Naive thymus-derived CD4-positive, alpha-beta T cell (primary cell): ENCODE measurements at regions of chr20 and their contacts with region 1.

Region 1: DNA sequence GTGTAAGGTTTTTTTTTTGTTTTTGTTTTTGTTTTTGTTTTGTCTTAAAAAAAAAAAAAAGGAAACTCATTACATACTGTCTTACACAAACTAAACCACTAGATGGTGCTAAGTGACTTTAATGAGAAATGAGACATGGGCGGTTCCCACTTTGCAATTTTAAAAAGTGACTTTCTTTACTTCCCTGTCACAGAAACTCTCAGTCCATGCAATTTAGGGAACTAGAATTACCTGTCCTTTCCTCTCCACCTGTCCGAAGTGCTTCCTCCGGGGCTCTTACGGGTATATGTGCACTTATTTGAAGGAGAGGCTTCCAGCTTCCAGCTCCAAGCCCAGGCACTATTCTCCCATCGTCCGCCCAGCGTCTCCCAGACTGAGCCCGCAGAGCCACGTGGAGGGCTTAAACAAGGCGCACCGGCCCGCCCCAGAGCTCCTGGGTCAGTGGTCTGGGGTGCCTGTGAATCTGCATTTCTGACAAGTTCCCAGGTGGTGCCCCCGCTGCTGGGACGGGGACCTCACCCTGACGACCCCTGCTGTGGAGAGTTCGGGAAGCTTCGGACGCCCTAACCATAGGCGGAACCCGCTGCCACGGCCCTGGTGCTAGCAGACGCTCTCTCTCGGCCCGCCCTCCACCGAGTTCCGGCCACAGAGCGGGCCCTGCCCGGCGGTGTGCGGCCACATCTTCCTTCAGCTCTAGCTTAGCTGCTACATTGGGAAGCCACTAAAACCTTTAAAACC is 26.1 kb downstream of the BFSP1 start:
- DNase-seq: peak; percentile 13 to 70 (median 62)
- ATAC-seq: peak; percentile 85
- H3K4me3 ChIP-seq: peak overlapping the region; percentile 65
- H3K4me3 Mint-ChIP-seq: peak overlapping the region; percentile 82 to 95 (median 91)
- H3K27ac ChIP-seq: no peak overlapping the region
- H3K27ac Mint-ChIP-seq: peak overlapping the region in 8 of 9 donors; percentile 15 to 92 (median 82)
- H3K4me1 ChIP-seq: peaks cover 6 to 27% of the 10 kb centered on the region in 2 donors
- H3K4me1 Mint-ChIP-seq: peaks cover 10 to 57% (median 36%) of the 10 kb centered on the region in 7 donors
- H3K27me3 ChIP-seq: no peaks in the 10 kb centered on the region
- H3K27me3 Mint-ChIP-seq: peaks cover 0 to 19% (median 0%) of the 10 kb centered on the region in 5 donors

Region 2: GRCh38 chr20:17169585-17170136 is 335.4 kb before region 1 on chr20:
- CTCF ChIA-PET with region 1: no interaction called
- POLR2A ChIA-PET with region 1: no interaction called
- intact Hi-C with region 1: no loop called
- DNase-seq: no peak
- ATAC-seq: no peak
- H3K4me3 ChIP-seq: no peak overlapping the region
- H3K4me3 Mint-ChIP-seq: no peak overlapping the region
- H3K27ac ChIP-seq: no peak overlapping the region
- H3K27ac Mint-ChIP-seq: no peak overlapping the region
- H3K4me1 ChIP-seq: no peaks in the 10 kb centered on the region
- H3K4me1 Mint-ChIP-seq: no peaks in the 10 kb centered on the region
- H3K27me3 ChIP-seq: no peaks in the 10 kb centered on the region
- H3K27me3 Mint-ChIP-seq: peaks cover 0 to 5% (median 3%) of the 10 kb centered on the region in 5 donors

Region 3: GRCh38 chr20:17536944-17537444 is 31.9 kb after region 1 on chr20:
- CTCF ChIA-PET with region 1: no interaction called
- POLR2A ChIA-PET with region 1: no interaction called
- intact Hi-C with region 1: loop called (anchors 1 kb)
- DNase-seq: peak; percentile 22 to 73 (median 65)
- ATAC-seq: peak; percentile 98
- H3K4me3 ChIP-seq: no peak overlapping the region
- H3K4me3 Mint-ChIP-seq: no peak overlapping the region
- H3K27ac ChIP-seq: no peak overlapping the region
- H3K27ac Mint-ChIP-seq: peak overlapping the region in 2 of 9 donors; percentile 50 to 52
- H3K4me1 ChIP-seq: peaks cover 0 to under 1% of the 10 kb centered on the region in 2 donors
- H3K4me1 Mint-ChIP-seq: peaks cover 0 to 39% (median 0%) of the 10 kb centered on the region in 7 donors
- H3K27me3 ChIP-seq: no peaks in the 10 kb centered on the region
- H3K27me3 Mint-ChIP-seq: peaks cover 10 to 30% (median 18%) of the 10 kb centered on the region in 5 donors

Region 4: GRCh38 chr20:17550983-17551350 is 45.9 kb after region 1 on chr20:
- CTCF ChIA-PET with region 1: no interaction called
- POLR2A ChIA-PET with region 1: no interaction called
- intact Hi-C with region 1: no loop called
- DNase-seq: no peak
- ATAC-seq: no peak
- H3K4me3 ChIP-seq: no peak overlapping the region
- H3K4me3 Mint-ChIP-seq: no peak overlapping the region
- H3K27ac ChIP-seq: no peak overlapping the region
- H3K27ac Mint-ChIP-seq: no peak overlapping the region
- H3K4me1 ChIP-seq: no peaks in the 10 kb centered on the region
- H3K4me1 Mint-ChIP-seq: no peaks in the 10 kb centered on the region
- H3K27me3 ChIP-seq: no peaks in the 10 kb centered on the region
- H3K27me3 Mint-ChIP-seq: peaks cover 3 to 22% (median 6%) of the 10 kb centered on the region in 5 donors

Region 5: GRCh38 chr20:17617551-17618223 is 112.6 kb after region 1 on chr20:
- CTCF ChIA-PET with region 1: interaction called, 9 read pairs
- POLR2A ChIA-PET with region 1: no interaction called
- intact Hi-C with region 1: loop called (anchors 1 kb)
- DNase-seq: peak; percentile 22 to 59 (median 30)
- ATAC-seq: peak; percentile 56
- H3K4me3 ChIP-seq: no peak overlapping the region
- H3K4me3 Mint-ChIP-seq: no peak overlapping the region
- H3K27ac ChIP-seq: no peak overlapping the region
- H3K27ac Mint-ChIP-seq: peak overlapping the region in 1 of 9 donors; percentile 14
- H3K4me1 ChIP-seq: peaks cover 3 to 4% of the 10 kb centered on the region in 2 donors
- H3K4me1 Mint-ChIP-seq: peaks cover 0 to 8% (median 6%) of the 10 kb centered on the region in 7 donors
- H3K27me3 ChIP-seq: no peaks in the 10 kb centered on the region
- H3K27me3 Mint-ChIP-seq: no peaks in the 10 kb centered on the region

Region 6: GRCh38 chr20:17898548-17898994 is 393.5 kb after region 1 on chr20:
- CTCF ChIA-PET with region 1: interaction called, 39 read pairs
- POLR2A ChIA-PET with region 1: no interaction called
- intact Hi-C with region 1: loop called (anchors 1 kb)
- DNase-seq: peak; percentile 23 to 64 (median 54)
- ATAC-seq: peak; percentile 81
- H3K4me3 ChIP-seq: no peak overlapping the region
- H3K4me3 Mint-ChIP-seq: no peak overlapping the region
- H3K27ac ChIP-seq: no peak overlapping the region
- H3K27ac Mint-ChIP-seq: no peak overlapping the region
- H3K4me1 ChIP-seq: no peaks in the 10 kb centered on the region
- H3K4me1 Mint-ChIP-seq: peaks cover 0 to 21% (median 11%) of the 10 kb centered on the region in 7 donors
- H3K27me3 ChIP-seq: no peaks in the 10 kb centered on the region
- H3K27me3 Mint-ChIP-seq: peaks cover 22 to 41% (median 34%) of the 10 kb centered on the region in 5 donors

Region 7: GRCh38 chr20:17995967-17996819 is 491.1 kb after region 1 on chr20:
- CTCF ChIA-PET with region 1: interaction called, 7 read pairs
- POLR2A ChIA-PET with region 1: no interaction called
- intact Hi-C with region 1: loop called (anchors 1 kb)
- DNase-seq: peak in 7 of 9 donors; percentile 35 to 68 (median 59)
- ATAC-seq: peak; percentile 94
- H3K4me3 ChIP-seq: no peak overlapping the region
- H3K4me3 Mint-ChIP-seq: no peak overlapping the region
- H3K27ac ChIP-seq: no peak overlapping the region
- H3K27ac Mint-ChIP-seq: peak overlapping the region in 1 of 9 donors; percentile 48
- H3K4me1 ChIP-seq: peaks cover 0 to 8% of the 10 kb centered on the region in 2 donors
- H3K4me1 Mint-ChIP-seq: peaks cover 4 to 45% (median 6%) of the 10 kb centered on the region in 7 donors
- H3K27me3 ChIP-seq: no peaks in the 10 kb centered on the region
- H3K27me3 Mint-ChIP-seq: peaks cover 3 to 13% (median 8%) of the 10 kb centered on the region in 5 donors

Region 8: DNA sequence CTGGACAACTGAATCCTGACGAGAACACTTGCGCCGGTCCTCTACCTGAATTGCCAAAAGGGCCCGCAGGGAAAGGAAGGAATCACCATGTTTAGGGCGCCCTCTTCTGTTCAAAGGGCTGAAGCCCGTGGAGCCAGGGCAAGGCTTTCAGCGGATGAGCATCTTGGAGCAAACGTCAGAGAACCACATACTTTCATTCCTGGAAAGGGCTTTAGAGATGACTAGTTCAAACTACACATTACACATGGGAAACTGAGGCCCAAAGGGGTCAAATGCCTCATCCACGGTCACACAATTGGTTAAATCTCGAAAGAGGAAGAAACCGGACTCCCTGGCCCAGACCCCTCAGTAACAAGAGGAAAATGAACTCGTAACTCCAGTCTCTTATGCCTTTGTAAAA is 771.8 kb after region 1 on chr20:
- CTCF ChIA-PET with region 1: interaction called, 3 read pairs
- POLR2A ChIA-PET with region 1: no interaction called
- intact Hi-C with region 1: loop called in 1 of 2 experiments (anchors 1 kb)
- DNase-seq: peak in 8 of 9 donors; percentile 12 to 62 (median 36)
- ATAC-seq: peak; percentile 74
- H3K4me3 ChIP-seq: no peak overlapping the region
- H3K4me3 Mint-ChIP-seq: no peak overlapping the region
- H3K27ac ChIP-seq: no peak overlapping the region
- H3K27ac Mint-ChIP-seq: no peak overlapping the region
- H3K4me1 ChIP-seq: no peaks in the 10 kb centered on the region
- H3K4me1 Mint-ChIP-seq: peaks cover 0 to 6% (median 0%) of the 10 kb centered on the region in 7 donors
- H3K27me3 ChIP-seq: peaks cover 2 to 4% of the 10 kb centered on the region in 2 donors
- H3K27me3 Mint-ChIP-seq: peaks cover 43 to 67% (median 50%) of the 10 kb centered on the region in 5 donors